ENCODE measurements at regions of chr12 and their contacts with region 1.

Region 1: DNA sequence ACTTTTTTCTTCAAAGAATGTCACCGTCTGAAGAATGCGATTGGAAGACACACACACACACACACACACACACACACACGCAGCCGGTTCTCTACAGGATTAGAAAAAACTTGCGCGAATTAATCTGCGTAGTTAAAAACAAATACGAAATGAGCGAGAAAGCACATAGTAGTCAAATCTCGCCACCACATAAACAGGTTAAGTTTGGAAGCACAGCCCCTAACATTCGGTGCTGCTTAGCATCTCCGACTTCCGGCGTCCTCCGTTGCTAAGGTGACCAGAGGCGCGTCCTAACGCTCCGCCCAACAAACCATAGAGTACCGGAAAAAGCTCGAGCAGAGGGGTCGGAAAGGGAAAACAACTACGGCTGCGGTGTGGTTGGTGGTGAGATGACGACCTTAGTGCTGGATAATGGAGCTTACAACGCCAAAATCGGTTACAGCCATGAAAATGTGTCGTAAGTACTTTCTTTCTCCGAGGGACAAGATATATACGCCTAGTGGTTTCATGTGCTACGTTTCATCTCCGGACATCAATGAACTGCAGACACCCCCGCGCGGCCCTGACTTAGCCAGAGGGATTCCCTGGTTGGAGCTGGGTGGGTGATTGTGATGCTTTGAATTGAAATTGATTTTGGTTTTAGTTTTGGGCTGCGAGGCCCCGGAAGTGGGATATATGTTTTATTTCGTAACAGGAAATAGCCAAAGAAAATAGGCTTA is at the start of gene ACTR6:
- DNase-seq: peak; percentile 99
- ATAC-seq: peak; percentile 81
- H3K4me3 ChIP-seq: peak within 1 kb of the TSS; percentile 85
- H3K27ac ChIP-seq: peak within 1 kb of the TSS; percentile 33
- H3K4me1 ChIP-seq: peaks cover 36% of the 10 kb centered on the region
- H3K27me3 ChIP-seq: no peaks in the 10 kb centered on the region
- CTCF ChIP-seq: no peak
- total RNA-seq, gene ACTR6: 18.4 and 21.2 TPM in 2 replicates

Region 2: GRCh38 chr12:100058482-100059029 is 142.1 kb before region 1 on chr12:
- CTCF ChIA-PET with region 1: interaction called, 5 read pairs
- POLR2A ChIA-PET with region 1: no interaction called
- intact Hi-C with region 1: loop called (anchors 5 kb)
- DNase-seq: peak; percentile 68
- ATAC-seq: peak; percentile 96
- H3K4me3 ChIP-seq: no peak overlapping the region
- H3K27ac ChIP-seq: no peak overlapping the region
- H3K4me1 ChIP-seq: peaks cover 6% of the 10 kb centered on the region; the same call in 1 of the 2 replicates
- H3K27me3 ChIP-seq: no peaks in the 10 kb centered on the region
- CTCF ChIP-seq: peak; percentile 52

Region 3: GRCh38 chr12:100142851-100143559 is 57.6 kb before region 1 on chr12 and contains the start of gene BLTP3B:
- CTCF ChIA-PET with region 1: no interaction called
- POLR2A ChIA-PET with region 1: no interaction called
- intact Hi-C with region 1: loop called (anchors 1 kb)
- DNase-seq: peak; percentile 76
- ATAC-seq: peak; percentile 78
- H3K4me3 ChIP-seq: peak within 1 kb of the TSS; percentile 98
- H3K27ac ChIP-seq: peak within 1 kb of the TSS; percentile 64
- H3K4me1 ChIP-seq: peaks cover 32% of the 10 kb centered on the region
- H3K27me3 ChIP-seq: no peaks in the 10 kb centered on the region
- CTCF ChIP-seq: no peak
- total RNA-seq, gene BLTP3B: 29.0 and 32.0 TPM in 2 replicates

Region 4: GRCh38 chr12:100163416-100164152 is 37.0 kb before region 1 on chr12:
- CTCF ChIA-PET with region 1: no interaction called
- POLR2A ChIA-PET with region 1: no interaction called
- intact Hi-C with region 1: loop called (anchors 1 kb)
- DNase-seq: peak; percentile 89
- ATAC-seq: peak; percentile 100
- H3K4me3 ChIP-seq: peak overlapping the region; percentile 60
- H3K27ac ChIP-seq: no peak overlapping the region
- H3K4me1 ChIP-seq: peaks cover 11% of the 10 kb centered on the region
- H3K27me3 ChIP-seq: no peaks in the 10 kb centered on the region
- CTCF ChIP-seq: peak; percentile 39; the same call in 1 of the 2 replicates

Region 5: DNA sequence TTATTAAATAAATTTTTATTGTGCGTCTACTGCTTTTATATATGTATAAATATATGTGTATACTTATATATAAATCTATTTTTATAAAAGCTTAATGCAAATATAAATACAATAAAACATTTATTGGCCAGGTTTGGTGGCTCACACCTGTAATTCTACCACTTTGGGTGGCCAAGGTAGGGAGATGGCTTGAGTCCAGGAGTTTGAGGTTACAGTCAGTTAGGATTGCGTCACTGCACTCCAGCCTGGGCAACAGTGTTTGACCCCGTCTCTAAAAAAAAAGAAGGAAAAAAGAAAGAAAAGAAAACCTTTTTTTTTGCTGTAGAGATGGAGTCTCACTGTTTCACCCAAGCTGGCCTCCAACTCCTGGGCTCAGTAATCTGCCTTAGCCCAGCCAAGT is 20.9 kb after region 1 on chr12:
- CTCF ChIA-PET with region 1: no interaction called
- POLR2A ChIA-PET with region 1: interaction called, 5 read pairs
- intact Hi-C with region 1: loop called (anchors 1 kb)
- DNase-seq: peak; percentile 57
- ATAC-seq: peak; percentile 11; the same call in 1 of the 2 replicates
- H3K4me3 ChIP-seq: no peak overlapping the region
- H3K27ac ChIP-seq: no peak overlapping the region
- H3K4me1 ChIP-seq: peaks cover 4% of the 10 kb centered on the region; the same call in 1 of the 2 replicates
- H3K27me3 ChIP-seq: no peaks in the 10 kb centered on the region
- CTCF ChIP-seq: no peak